CD8-positive, alpha-beta memory T cell (primary cell): ENCODE measurements at regions of chr1 and their contacts with region 1.

Region 1: DNA sequence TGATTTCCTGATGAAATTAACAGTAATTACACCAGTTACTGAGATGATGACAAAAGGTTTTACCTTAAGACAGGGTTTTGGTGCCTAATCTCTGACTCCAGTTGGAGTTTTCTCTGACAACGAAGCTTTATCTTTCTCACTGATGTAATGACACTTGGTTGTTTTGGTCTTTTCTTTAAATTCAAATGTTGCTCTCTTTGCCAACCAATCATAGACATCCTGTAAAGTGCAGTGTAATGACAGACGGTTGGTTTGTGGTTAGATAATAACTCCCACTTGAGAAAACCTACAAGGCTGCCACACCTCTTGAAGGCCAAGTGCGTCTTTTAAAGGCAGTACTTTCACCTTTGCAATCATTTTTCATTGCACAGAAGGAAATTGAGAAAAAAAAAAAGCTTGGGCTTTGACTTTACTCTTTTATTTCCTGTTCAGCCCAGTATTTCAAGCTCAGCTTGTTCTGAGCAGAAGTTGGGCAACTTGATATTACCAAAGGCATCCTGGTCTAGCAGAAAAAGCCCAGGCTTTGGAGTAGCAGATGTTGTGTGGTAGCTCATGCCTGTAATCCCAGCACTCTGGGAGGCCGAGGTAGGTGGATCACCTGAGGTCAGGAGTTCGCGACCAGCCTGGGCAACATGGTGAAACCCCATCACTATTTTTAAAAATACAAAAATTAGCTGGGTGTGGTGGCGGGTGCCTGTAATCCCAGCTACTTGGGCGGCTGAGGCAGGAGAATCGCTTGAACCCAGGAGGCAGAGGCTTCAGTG is 14.9 kb downstream of the PDIK1L start:
- DNase-seq: peak in 4 of 5 donors; percentile 46 to 90 (median 84)
- H3K4me3 ChIP-seq: peak overlapping the region; percentile 38
- H3K4me3 Mint-ChIP-seq: peak overlapping the region; percentile 22 to 82 (median 71)
- H3K27ac ChIP-seq: peak overlapping the region; percentile 79
- H3K27ac Mint-ChIP-seq: peak overlapping the region; percentile 58 to 93 (median 89)
- H3K4me1 ChIP-seq: peaks cover 29% of the 10 kb centered on the region
- H3K4me1 Mint-ChIP-seq: peaks cover 32 to 53% (median 48%) of the 10 kb centered on the region in 3 donors
- H3K27me3 ChIP-seq: no peaks in the 10 kb centered on the region
- H3K27me3 Mint-ChIP-seq: peaks cover 0 to 16% of the 10 kb centered on the region in 2 donors

Region 2: DNA sequence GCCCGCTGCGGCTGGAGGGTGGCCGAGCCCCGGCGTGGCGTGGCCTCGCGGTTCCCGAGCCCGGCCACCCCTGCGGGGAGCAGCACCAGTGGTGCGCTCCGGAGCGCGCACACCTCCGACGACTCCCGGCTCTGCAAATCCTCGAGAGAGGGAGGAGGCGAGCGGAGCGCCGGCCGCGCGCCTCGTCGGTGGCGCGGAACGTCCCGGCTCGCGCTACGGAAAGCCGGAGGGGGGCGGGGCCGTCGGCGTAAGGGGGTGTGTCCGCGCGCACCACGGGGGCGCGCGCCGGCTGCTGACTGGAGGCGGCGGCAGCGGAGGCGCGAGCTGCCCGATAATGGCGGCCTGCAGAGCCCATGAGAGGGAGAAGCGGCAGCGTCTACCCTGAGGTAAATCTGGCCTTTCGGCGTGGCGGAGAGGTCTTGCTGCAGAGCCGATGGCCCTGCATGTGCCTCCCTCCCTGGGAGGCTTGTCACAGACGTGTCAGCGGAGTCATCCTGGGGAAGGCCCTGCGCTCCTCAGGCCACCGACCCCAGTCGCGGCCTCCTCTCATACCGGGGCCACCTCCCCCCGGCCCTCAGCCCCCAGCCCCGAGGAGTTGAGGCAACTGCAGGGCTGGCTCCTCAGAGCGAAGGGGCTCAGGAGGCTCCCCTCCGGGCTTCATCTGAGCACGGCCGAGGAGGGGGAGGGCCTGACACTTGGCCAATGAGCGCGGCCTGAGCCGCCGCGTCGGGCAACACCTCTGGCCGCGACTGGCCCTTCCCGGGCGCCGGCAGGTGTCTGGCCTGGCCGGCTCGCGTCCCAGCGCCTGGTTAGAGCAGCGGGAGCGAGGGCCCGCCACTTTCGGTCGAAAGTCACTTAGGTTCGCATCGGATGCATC is 14.7 kb before region 1 on chr1 and contains the start of gene PDIK1L:
- CTCF ChIA-PET with region 1: interaction called, 10 read pairs
- POLR2A ChIA-PET with region 1: interaction called, 24 read pairs
- DNase-seq: peak; percentile 91 to 95 (median 92)
- H3K4me3 ChIP-seq: peak within 1 kb of the TSS; percentile 89
- H3K4me3 Mint-ChIP-seq: peak within 1 kb of the TSS; percentile 91 to 97 (median 93)
- H3K27ac ChIP-seq: peak within 1 kb of the TSS; percentile 85
- H3K27ac Mint-ChIP-seq: peak within 1 kb of the TSS; percentile 74 to 94 (median 92)
- H3K4me1 ChIP-seq: peaks cover 26% of the 10 kb centered on the region
- H3K4me1 Mint-ChIP-seq: peaks cover 22 to 38% (median 36%) of the 10 kb centered on the region in 3 donors
- H3K27me3 ChIP-seq: no peaks in the 10 kb centered on the region
- H3K27me3 Mint-ChIP-seq: no peaks in the 10 kb centered on the region
- total RNA-seq, gene PDIK1L: 14.5 to 14.6 TPM

Region 3: DNA sequence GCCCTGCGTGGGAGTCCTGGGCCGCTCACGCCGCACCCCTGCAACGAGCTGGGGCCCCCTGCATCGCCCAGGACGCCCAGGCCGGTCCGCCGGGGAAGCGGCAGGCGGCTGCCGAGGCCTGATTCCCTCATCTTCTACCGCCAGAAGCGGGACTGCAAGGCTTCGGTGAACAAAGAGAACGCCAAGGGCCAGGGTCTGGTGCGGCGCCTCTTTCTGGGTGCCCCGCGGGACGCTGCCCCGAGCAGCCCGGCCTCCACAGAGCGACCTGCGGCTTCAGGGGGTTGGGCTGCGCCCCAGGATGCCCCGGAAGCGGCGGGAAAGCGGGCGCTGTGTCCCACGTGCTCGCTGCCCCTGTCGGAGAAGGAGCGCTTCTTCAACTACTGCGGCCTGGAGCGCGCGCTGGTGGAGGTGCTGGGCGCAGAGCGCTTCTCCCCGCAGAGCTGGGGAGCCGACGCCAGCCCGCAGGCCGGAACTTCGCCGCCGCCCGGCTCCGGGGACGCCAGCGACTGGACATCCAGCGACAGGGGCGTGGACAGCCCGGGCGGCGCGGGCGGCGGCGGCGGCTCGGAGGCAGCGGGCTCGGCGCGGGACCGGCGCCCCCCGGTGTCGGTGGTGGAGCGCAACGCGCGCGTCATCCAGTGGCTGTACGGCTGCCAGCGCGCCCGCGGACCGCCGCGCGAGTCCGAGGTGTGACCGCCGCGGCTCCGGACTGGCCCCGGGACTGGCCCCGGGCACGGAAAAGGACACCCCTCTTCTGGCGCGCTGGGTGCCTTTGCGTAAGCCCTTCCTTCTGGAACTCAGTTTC is 35.1 kb after region 1 on chr1:
- CTCF ChIA-PET with region 1: no interaction called
- POLR2A ChIA-PET with region 1: no interaction called
- DNase-seq: peak in 2 of 5 donors; percentile 35 to 57
- H3K4me3 ChIP-seq: peak overlapping the region; percentile 26
- H3K4me3 Mint-ChIP-seq: peak overlapping the region in 3 of 7 donors; percentile 43 to 62 (median 44)
- H3K27ac ChIP-seq: peak overlapping the region; percentile 16
- H3K27ac Mint-ChIP-seq: no peak overlapping the region
- H3K4me1 ChIP-seq: peaks cover 16% of the 10 kb centered on the region
- H3K4me1 Mint-ChIP-seq: peaks cover 11 to 23% (median 13%) of the 10 kb centered on the region in 3 donors
- H3K27me3 ChIP-seq: peaks cover 13% of the 10 kb centered on the region
- H3K27me3 Mint-ChIP-seq: peaks cover 43 to 46% of the 10 kb centered on the region in 2 donors

Region 4: GRCh38 chr1:26265405-26265804 is 138.9 kb after region 1 on chr1:
- CTCF ChIA-PET with region 1: no interaction called
- POLR2A ChIA-PET with region 1: interaction called, 12 read pairs
- DNase-seq: no peak
- H3K4me3 ChIP-seq: no peak overlapping the region
- H3K4me3 Mint-ChIP-seq: no peak overlapping the region
- H3K27ac ChIP-seq: no peak overlapping the region
- H3K27ac Mint-ChIP-seq: no peak overlapping the region
- H3K4me1 ChIP-seq: no peaks in the 10 kb centered on the region
- H3K4me1 Mint-ChIP-seq: no peaks in the 10 kb centered on the region
- H3K27me3 ChIP-seq: no peaks in the 10 kb centered on the region
- H3K27me3 Mint-ChIP-seq: no peaks in the 10 kb centered on the region